Lower leg skin (tissue), 4 donors: ENCODE measurements at regions of chr16 and their contacts with region 1.

Region 1: GRCh38 chr16:87098976-87099720 is 218.0 kb downstream of the C16orf95 start:
- DNase-seq: peak in 1 of 2 donors; percentile 74
- H3K4me3 ChIP-seq: no peak overlapping the region
- CTCF ChIP-seq: no peak
- POLR2A ChIP-seq: no peak

Region 2: GRCh38 chr16:86193495-86194176 is 905.5 kb before region 1 on chr16:
- intact Hi-C with region 1: loop called (anchors 5 kb)
- DNase-seq: no peak
- H3K4me3 ChIP-seq: no peak overlapping the region
- CTCF ChIP-seq: no peak
- POLR2A ChIP-seq: no peak